PC-9 (cell line): ENCODE measurements at regions of chr22 and their contacts with region 1.

Region 1: GRCh38 chr22:42939941-42940653 is 74.9 kb downstream of the PACSIN2 start:
- DNase-seq: peak; percentile 69 to 99
- H3K4me3 ChIP-seq: peak overlapping the region; percentile 21; the same call in 1 of the 2 replicates
- H3K27ac ChIP-seq: peak overlapping the region; percentile 92
- H3K4me1 ChIP-seq: peaks cover 62% of the 10 kb centered on the region
- H3K27me3 ChIP-seq: no peaks in the 10 kb centered on the region
- CTCF ChIP-seq: no peak

Region 2: GRCh38 chr22:42959576-42960509 is 19.7 kb after region 1 on chr22:
- CTCF ChIA-PET with region 1: no interaction called
- POLR2A ChIA-PET with region 1: no interaction called
- intact Hi-C with region 1: loop called (anchors 2 kb)
- DNase-seq: peak; percentile 55 to 90
- H3K4me3 ChIP-seq: peak overlapping the region; percentile 39; the same call in 1 of the 2 replicates
- H3K27ac ChIP-seq: peak overlapping the region; percentile 75
- H3K4me1 ChIP-seq: peaks cover 61% of the 10 kb centered on the region
- H3K27me3 ChIP-seq: no peaks in the 10 kb centered on the region
- CTCF ChIP-seq: no peak

Region 3: GRCh38 chr22:42978453-42979103 is 38.5 kb after region 1 on chr22:
- CTCF ChIA-PET with region 1: interaction called, 6 read pairs
- POLR2A ChIA-PET with region 1: no interaction called
- intact Hi-C with region 1: loop called (anchors 2 kb)
- DNase-seq: peak; percentile 75 to 98
- H3K4me3 ChIP-seq: 0 out of 2 replicates have a peak overlapping the region, but pooled peaks have one; percentile 9
- H3K27ac ChIP-seq: peak overlapping the region; percentile 80
- H3K4me1 ChIP-seq: peaks cover 46% of the 10 kb centered on the region
- H3K27me3 ChIP-seq: no peaks in the 10 kb centered on the region
- CTCF ChIP-seq: no peak